ENCODE measurements at regions of chr16 and their contacts with region 1.

Region 1: GRCh38 chr16:48365581-48366164 is 19.5 kb downstream of the SIAH1 start:
- DNase-seq: peak; percentile 96
- ATAC-seq: peak; percentile 99

Region 2: DNA sequence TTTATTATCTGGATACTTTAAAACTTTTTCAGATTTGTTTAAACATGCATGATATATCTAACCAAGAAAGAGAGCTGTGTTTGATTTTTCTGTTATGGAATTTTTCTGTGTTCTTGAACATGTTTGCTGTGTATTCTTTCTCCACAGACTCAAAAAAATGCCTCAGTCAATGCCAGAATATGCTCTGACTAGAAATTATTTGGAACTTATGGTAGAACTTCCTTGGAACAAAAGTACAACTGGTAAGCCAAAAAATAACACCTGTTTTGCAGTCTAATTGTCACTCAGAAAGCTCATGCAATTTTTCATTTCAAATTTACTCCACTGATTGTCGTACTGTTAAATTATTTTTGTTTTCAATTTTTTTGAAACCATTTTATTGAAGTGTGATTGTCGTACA is 103.0 kb before region 1 on chr16:
- intact Hi-C with region 1: no loop called
- DNase-seq: no peak
- ATAC-seq: no peak

Region 3: GRCh38 chr16:48385272-48386150 is 19.8 kb after region 1 on chr16 and contains the start of gene SIAH1:
- intact Hi-C with region 1: loop called (anchors 2 kb)
- DNase-seq: peak; percentile 94
- ATAC-seq: peak; percentile 93
- total RNA-seq, gene SIAH1: 16.1 TPM

Region 4: DNA sequence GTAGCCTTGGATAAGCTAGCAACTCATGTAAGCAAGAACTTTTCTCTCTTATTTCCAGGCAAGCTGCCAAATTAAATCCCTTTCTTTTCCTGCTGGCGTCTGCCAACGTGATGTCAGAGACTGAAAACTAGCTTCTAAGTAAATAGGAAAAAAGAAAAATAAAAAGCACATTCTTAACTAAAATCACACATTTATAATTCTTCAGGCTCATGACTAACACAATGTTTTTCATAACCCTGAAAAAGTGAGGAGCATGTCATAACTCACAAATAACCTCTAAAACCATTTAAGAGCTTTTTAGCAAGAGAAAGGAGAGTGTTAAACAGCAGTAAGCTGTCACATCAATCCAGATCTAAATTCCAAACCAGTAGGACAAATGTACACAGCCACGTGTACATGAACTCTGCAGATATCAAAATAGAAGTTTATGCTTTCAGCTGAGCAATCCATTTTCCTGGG is 134.3 kb after region 1 on chr16:
- intact Hi-C with region 1: no loop called
- DNase-seq: no peak
- ATAC-seq: peak; percentile 64

Region 5: DNA sequence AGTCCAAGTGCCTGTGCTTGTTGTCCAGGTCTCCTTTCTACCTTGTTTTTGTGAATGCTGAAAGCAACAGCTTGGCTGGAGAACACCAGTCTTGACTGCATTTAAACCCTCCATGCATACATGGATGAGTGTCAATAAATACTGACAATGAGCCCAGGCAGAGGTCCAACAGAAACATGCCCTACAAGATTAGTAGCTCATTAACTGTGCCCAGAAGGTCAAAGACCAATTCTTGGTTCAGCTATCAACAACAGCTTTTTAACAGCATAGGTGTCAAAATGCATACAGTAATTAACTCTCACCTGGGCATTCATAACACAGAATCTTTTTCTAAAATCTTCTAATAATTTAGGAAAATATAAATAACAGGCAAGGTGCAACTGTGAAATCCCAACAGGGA is 181.1 kb after region 1 on chr16:
- intact Hi-C with region 1: no loop called
- DNase-seq: no peak
- ATAC-seq: peak; percentile 72

Measured in Right ventricle myocardium inferior (tissue), 1 donor.